ENCODE measurements at regions of chr2 and their contacts with region 1.

Region 1: DNA sequence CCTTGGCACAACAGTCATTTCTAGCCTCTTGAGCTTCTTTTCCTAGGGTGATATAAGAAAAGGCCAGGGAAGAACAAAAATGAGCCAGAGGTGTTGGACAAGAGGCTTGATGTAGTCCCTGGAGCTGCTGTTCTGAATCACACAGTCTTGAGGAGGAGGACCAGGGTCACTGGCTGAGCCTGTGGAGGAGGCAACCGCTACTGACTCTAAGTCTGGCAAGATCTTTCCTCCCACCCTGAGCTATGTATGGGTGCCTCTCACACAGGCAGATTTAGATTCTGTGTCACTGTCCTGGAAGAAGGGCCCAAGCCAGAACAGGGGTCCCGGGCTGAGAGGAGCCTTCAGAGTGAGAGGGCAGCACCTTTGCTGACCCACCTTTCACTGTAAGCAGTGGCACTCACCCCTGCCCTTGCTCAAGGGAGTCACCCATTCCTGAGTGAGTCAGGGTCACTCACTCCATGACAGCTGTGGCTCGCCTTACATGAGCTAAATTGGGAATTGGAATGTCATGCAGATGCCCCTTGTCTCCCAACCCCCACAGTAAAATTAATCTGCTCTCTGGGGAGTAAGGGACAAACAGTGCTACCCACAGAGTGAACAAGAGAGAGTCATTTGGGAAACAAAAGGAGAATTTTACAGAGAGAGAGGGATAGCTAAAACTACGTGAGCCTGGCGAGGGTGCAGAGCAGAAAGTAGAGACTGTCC is at the start of gene TRIM54:
- DNase-seq: no peak
- ATAC-seq: no peak
- H3K4me3 ChIP-seq: no peak within 1 kb of the TSS
- H3K4me3 Mint-ChIP-seq: peak within 1 kb of the TSS in 1 of 10 donors; percentile 35
- H3K27ac ChIP-seq: no peak within 1 kb of the TSS
- H3K27ac Mint-ChIP-seq: no peak within 1 kb of the TSS
- H3K4me1 ChIP-seq: no peaks in the 10 kb centered on the region
- H3K4me1 Mint-ChIP-seq: peaks cover 0 to 5% (median 4%) of the 10 kb centered on the region in 7 donors
- H3K27me3 ChIP-seq: no peaks in the 10 kb centered on the region
- H3K27me3 Mint-ChIP-seq: peaks cover 12 to 44% (median 26%) of the 10 kb centered on the region in 5 donors
- total RNA-seq, gene TRIM54: not detected

Region 2: GRCh38 chr2:26846328-26847306 is 435.4 kb before region 1 on chr2:
- CTCF ChIA-PET with region 1: no interaction called
- POLR2A ChIA-PET with region 1: no interaction called
- intact Hi-C with region 1: loop called in 1 of 2 experiments (anchors 1 kb)
- DNase-seq: peak; percentile 38 to 67 (median 59)
- ATAC-seq: peak; percentile 84
- H3K4me3 ChIP-seq: no peak overlapping the region
- H3K4me3 Mint-ChIP-seq: peak overlapping the region; percentile 61 to 88 (median 78)
- H3K27ac ChIP-seq: no peak overlapping the region
- H3K27ac Mint-ChIP-seq: no peak overlapping the region
- H3K4me1 ChIP-seq: peaks cover 8 to 20% of the 10 kb centered on the region in 2 donors
- H3K4me1 Mint-ChIP-seq: peaks cover 3 to 20% (median 13%) of the 10 kb centered on the region in 7 donors
- H3K27me3 ChIP-seq: peaks cover 6 to 17% of the 10 kb centered on the region in 2 donors
- H3K27me3 Mint-ChIP-seq: peaks cover 44 to 58% (median 46%) of the 10 kb centered on the region in 5 donors

Region 3: DNA sequence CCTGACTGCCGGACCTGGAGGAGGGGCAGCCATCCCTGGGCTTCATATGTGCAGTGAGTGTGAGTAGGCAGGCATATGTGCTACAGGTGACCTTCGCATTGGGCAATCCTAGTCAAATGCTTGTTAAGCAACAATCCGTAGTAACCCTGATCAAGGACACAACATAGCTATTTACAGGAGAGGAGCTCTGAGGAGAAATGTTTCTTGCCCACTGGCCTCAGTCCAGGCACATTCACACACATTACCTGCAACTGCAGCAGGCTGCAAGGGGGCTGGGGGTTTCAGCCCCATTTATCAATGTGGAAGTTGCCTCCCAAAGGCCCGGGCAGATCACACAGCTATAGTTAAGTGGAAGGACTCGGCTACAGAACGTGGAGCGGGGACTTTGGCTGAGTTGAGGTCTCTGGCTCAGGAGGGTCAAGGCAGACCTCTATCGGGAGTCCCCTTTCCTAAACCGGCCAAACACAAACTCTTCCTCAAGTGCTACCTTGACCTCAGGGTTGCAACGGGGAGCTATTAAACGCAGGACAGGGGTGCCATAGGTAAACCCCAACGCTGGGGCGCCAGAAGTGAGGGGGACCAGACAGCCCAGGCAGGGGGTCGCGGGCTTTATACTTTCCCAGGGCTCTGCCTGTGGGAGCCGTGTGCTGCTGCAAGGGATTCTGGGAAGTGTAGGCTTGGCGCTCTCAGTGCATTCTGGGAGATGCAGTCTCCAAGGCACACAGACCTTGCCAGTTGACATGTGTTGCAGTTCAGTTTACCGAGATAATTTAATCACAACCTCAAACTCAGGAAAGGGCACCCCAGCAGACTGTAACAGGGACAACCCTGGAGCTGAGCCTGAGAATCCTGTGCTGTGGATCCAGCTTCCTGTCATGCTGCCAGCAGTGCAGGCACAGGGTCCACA is 186.0 kb before region 1 on chr2:
- CTCF ChIA-PET with region 1: interaction called, 12 read pairs
- POLR2A ChIA-PET with region 1: interaction called, 4 read pairs
- intact Hi-C with region 1: loop called (anchors 1 kb)
- DNase-seq: peak in 4 of 9 donors; percentile 21 to 44 (median 39)
- ATAC-seq: peak; percentile 80
- H3K4me3 ChIP-seq: peak overlapping the region; percentile 25
- H3K4me3 Mint-ChIP-seq: peak overlapping the region in 9 of 10 donors; percentile 29 to 76 (median 67)
- H3K27ac ChIP-seq: no peak overlapping the region
- H3K27ac Mint-ChIP-seq: peak overlapping the region in 2 of 9 donors; percentile 25 to 41
- H3K4me1 ChIP-seq: peaks cover 0 to 4% of the 10 kb centered on the region in 2 donors
- H3K4me1 Mint-ChIP-seq: peaks cover 9 to 16% (median 11%) of the 10 kb centered on the region in 7 donors
- H3K27me3 ChIP-seq: no peaks in the 10 kb centered on the region
- H3K27me3 Mint-ChIP-seq: no peaks in the 10 kb centered on the region

Region 4: GRCh38 chr2:27249891-27250651 is 31.9 kb before region 1 on chr2:
- CTCF ChIA-PET with region 1: interaction called, 4 read pairs
- POLR2A ChIA-PET with region 1: no interaction called
- intact Hi-C with region 1: loop called (anchors 1 kb)
- DNase-seq: peak; percentile 24 to 72 (median 37)
- ATAC-seq: peak; percentile 77
- H3K4me3 ChIP-seq: no peak overlapping the region
- H3K4me3 Mint-ChIP-seq: no peak overlapping the region
- H3K27ac ChIP-seq: no peak overlapping the region
- H3K27ac Mint-ChIP-seq: no peak overlapping the region
- H3K4me1 ChIP-seq: no peaks in the 10 kb centered on the region
- H3K4me1 Mint-ChIP-seq: peaks cover 0 to 6% (median 0%) of the 10 kb centered on the region in 7 donors
- H3K27me3 ChIP-seq: peaks cover 0 to 4% of the 10 kb centered on the region in 2 donors
- H3K27me3 Mint-ChIP-seq: peaks cover 3 to 22% (median 13%) of the 10 kb centered on the region in 5 donors

Region 5: DNA sequence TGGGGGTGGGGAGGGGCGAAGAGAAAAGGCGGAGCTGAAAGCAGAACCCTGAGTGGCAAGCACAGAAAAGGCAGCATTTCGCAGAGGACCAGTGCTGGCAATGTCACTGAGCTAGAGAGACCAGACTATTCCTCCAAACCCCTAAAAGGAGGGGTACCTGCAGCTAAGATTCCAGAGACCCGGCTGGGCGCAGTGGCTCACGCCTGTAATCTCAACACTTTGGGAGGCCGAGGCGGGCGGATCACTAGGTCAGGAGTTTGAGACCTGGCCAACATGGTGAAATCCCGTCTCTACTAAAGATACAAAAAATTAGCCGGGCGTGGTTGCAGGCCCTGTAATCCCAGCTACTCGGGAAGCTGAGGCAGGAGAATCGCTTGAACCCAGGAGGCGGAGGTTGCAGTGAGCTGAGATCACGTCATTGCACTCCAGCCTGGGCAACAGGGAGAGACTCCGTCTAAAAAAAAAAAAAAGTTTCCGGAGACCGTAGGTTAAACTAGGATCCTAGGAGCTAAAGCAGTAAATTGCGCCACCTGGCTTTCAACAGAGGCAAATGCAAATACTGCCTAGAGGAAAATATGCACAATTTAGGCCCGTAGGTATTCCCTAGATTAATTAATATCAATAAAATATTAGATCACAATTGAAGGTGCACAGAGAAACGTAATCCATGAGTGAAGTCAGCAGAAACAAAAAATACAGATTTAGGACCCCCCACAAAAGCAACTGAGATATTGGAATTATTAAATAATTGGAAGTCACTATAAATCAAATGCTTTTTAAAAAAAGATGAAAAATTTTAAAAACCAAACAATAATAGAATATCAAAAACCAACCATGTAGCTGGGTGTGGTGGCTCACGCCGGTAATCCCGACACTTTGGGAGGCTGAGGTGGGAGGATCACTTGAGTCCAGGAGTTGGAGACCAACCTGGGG is 21.4 kb after region 1 on chr2:
- CTCF ChIA-PET with region 1: interaction called, 18 read pairs
- POLR2A ChIA-PET with region 1: no interaction called
- intact Hi-C with region 1: loop called (anchors 1 kb)
- DNase-seq: peak in 8 of 9 donors; percentile 32 to 62 (median 54)
- ATAC-seq: peak; percentile 76
- H3K4me3 ChIP-seq: peak overlapping the region; percentile 43
- H3K4me3 Mint-ChIP-seq: peak overlapping the region; percentile 67 to 85 (median 80)
- H3K27ac ChIP-seq: peak overlapping the region; percentile 42
- H3K27ac Mint-ChIP-seq: peak overlapping the region in 7 of 9 donors; percentile 18 to 83 (median 54)
- H3K4me1 ChIP-seq: peaks cover 0 to 6% of the 10 kb centered on the region in 2 donors
- H3K4me1 Mint-ChIP-seq: peaks cover 0 to 11% (median 9%) of the 10 kb centered on the region in 7 donors
- H3K27me3 ChIP-seq: peaks cover 0 to 6% of the 10 kb centered on the region in 2 donors
- H3K27me3 Mint-ChIP-seq: peaks cover 13 to 34% (median 19%) of the 10 kb centered on the region in 5 donors

Region 6: GRCh38 chr2:27441958-27442919 is 160.2 kb after region 1 on chr2 and contains the start of gene KRTCAP3:
- CTCF ChIA-PET with region 1: no interaction called
- POLR2A ChIA-PET with region 1: no interaction called
- intact Hi-C with region 1: no loop called
- DNase-seq: peak in 8 of 9 donors; percentile 25 to 56 (median 36)
- ATAC-seq: peak; percentile 92
- H3K4me3 ChIP-seq: no peak within 1 kb of the TSS
- H3K4me3 Mint-ChIP-seq: peak within 1 kb of the TSS in 6 of 10 donors; percentile 7 to 51 (median 28)
- H3K27ac ChIP-seq: peak within 1 kb of the TSS; percentile 55
- H3K27ac Mint-ChIP-seq: peak within 1 kb of the TSS; percentile 18 to 86 (median 60)
- H3K4me1 ChIP-seq: no peaks in the 10 kb centered on the region
- H3K4me1 Mint-ChIP-seq: peaks cover 0 to 16% (median 7%) of the 10 kb centered on the region in 7 donors
- H3K27me3 ChIP-seq: no peaks in the 10 kb centered on the region
- H3K27me3 Mint-ChIP-seq: no peaks in the 10 kb centered on the region
- total RNA-seq, gene KRTCAP3: 5.7 to 27.1 (median 11.5) TPM